A673 (cell line): ENCODE measurements at regions of chr15 and their contacts with region 1.

Region 1: GRCh38 chr15:40323239-40323952 is at the start of gene INAFM2:
- DNase-seq: peak; percentile 98
- H3K4me3 ChIP-seq: peak within 1 kb of the TSS; percentile 60
- H3K27ac ChIP-seq: peak within 1 kb of the TSS; percentile 41
- H3K4me1 ChIP-seq: peaks cover 47% of the 10 kb centered on the region
- H3K27me3 ChIP-seq: no peaks in the 10 kb centered on the region
- CTCF ChIP-seq: peak; percentile 54
- total RNA-seq, gene INAFM2: 14.5 and 15.6 TPM in 2 replicates

Region 2: DNA sequence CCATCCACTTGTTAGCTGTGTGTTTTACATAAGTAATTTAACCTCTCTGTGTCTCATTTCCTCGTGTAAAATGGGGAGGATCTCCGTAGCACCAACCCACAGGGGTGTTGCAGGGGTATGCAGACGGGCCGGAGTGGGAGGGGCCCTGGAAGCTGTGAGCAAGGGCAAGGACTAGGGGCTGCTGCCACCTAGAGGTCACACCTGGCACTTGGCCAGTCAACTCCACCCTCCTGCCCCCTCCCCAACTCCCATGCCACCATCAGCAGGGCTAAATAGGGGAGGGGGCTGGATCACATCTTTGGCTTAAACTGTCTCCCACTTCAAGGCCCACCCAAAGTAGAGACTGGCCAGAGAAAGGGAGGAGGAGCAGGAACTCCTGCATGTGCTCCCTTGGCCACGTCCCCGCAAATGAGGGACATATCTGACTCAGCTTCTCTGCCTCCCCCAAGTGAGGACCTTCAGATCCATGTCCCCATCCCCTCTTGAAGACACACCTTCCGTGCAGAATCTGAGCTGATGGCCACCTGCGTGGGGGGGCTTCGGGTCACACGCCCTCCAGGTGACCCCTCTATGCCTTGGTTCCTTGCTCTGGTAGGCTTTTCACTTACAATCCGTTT is 14.8 kb after region 1 on chr15:
- CTCF ChIA-PET with region 1: interaction called, 14 read pairs
- POLR2A ChIA-PET with region 1: no interaction called
- intact Hi-C with region 1: no loop called
- DNase-seq: peak; percentile 90
- H3K4me3 ChIP-seq: no peak overlapping the region
- H3K27ac ChIP-seq: peak overlapping the region; percentile 87
- H3K4me1 ChIP-seq: peaks cover 77% of the 10 kb centered on the region
- H3K27me3 ChIP-seq: no peaks in the 10 kb centered on the region
- CTCF ChIP-seq: peak; percentile 93

Region 3: DNA sequence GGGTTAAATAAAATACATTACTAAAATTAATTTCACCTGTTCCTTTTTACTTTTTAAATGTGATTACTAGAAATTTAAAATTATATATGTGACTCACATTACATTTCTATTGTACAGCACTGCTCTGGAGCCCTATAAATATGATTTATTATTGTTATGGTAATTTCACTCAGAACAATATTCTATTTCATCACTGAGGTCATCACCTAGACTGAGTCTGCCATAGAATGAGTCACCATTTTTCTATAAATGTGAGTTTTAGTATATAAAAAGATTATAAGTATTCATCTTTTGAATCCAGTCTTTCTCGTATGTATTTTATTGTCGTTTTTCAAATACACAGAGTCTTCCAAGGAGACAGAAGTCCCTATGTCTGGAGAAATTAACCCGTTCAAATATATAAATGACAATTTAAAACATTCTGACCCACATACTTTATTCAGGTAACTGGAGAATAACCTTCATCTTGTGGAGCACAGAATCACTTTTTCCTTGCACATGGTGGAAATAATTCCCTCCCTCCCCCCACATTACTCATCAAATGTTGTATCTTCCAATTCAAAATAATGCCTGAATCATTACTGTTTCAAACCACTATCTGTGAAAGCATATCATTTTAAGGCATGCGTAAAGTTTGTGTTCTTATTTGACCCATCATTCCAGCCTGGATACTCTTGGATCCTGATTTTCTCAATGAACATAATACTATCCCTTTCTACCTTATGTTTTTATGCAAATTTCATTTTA is 177.4 kb after region 1 on chr15:
- CTCF ChIA-PET with region 1: no interaction called
- POLR2A ChIA-PET with region 1: no interaction called
- intact Hi-C with region 1: no loop called
- DNase-seq: no peak
- H3K4me3 ChIP-seq: no peak overlapping the region
- H3K27ac ChIP-seq: no peak overlapping the region
- H3K4me1 ChIP-seq: no peaks in the 10 kb centered on the region
- H3K27me3 ChIP-seq: no peaks in the 10 kb centered on the region
- CTCF ChIP-seq: no peak

Region 4: GRCh38 chr15:41125931-41126642 is 802.7 kb after region 1 on chr15:
- CTCF ChIA-PET with region 1: no interaction called
- POLR2A ChIA-PET with region 1: no interaction called
- intact Hi-C with region 1: no loop called
- DNase-seq: no peak
- H3K4me3 ChIP-seq: no peak overlapping the region
- H3K27ac ChIP-seq: no peak overlapping the region
- H3K4me1 ChIP-seq: no peaks in the 10 kb centered on the region
- H3K27me3 ChIP-seq: no peaks in the 10 kb centered on the region
- CTCF ChIP-seq: no peak